ENCODE measurements at regions of chr19 and their contacts with region 1.

Region 1: GRCh38 chr19:38666663-38667511 is 19.4 kb downstream of the ACTN4 start:
- DNase-seq: peak in 1 of 2 donors; percentile 76
- ATAC-seq: peak; percentile 22 to 66 (median 48)
- H3K4me3 ChIP-seq: peak overlapping the region in 2 of 10 donors; percentile 5 to 7
- H3K27ac ChIP-seq: peak overlapping the region; percentile 88 to 99 (median 96)
- H3K4me1 ChIP-seq: peaks cover 74 to 100% (median 100%) of the 10 kb centered on the region in 9 donors
- H3K27me3 ChIP-seq: no peaks in the 10 kb centered on the region
- CTCF ChIP-seq: no peak

Region 2: DNA sequence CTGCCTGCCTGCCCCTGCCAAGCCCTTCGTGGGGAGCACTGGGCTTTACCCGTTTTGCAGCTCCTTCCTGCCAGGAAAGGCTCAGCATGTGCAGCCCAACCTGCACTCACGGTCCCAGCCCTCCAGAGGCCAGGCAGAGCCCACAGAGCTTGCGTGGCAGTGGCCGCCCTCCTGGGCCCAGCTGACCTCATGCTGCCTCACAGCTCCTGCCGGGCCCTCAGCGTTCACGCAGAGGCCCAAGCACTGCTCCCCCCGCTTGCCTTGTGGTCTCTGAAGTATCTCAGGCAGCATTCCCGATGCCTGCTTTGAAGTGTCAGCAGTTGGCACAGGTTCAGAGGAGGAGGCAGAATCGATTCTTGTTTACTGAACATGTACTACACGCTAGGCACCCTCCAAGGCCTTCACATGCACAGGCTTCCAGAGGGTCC is 44.9 kb after region 1 on chr19:
- intact Hi-C with region 1: loop called in 3 of 10 experiments (anchors 5 kb)
- DNase-seq: peak in 1 of 2 donors; percentile 60
- ATAC-seq: peak in 7 of 8 donors; percentile 12 to 59 (median 37)
- H3K4me3 ChIP-seq: no peak overlapping the region
- H3K27ac ChIP-seq: peak overlapping the region; percentile 63 to 93 (median 84)
- H3K4me1 ChIP-seq: peaks cover 75 to 100% (median 90%) of the 10 kb centered on the region in 9 donors
- H3K27me3 ChIP-seq: no peaks in the 10 kb centered on the region
- CTCF ChIP-seq: no peak

Measured in heart right ventricle (tissue), 16 donors.